Activated T-helper 2 cell treated with anti-CD3 and anti-CD28 coated beads, Interferon-gamma antibody, Interleukin-2, Interleukin-4, amounts not matched to agents 10 μg/mL and 5 μg/mL and 100 μg/mL, durations not matched to agents 14 hours and 24 hours and 36 hours (primary cell): ENCODE measurements at regions of chr10 and their contacts with region 1.

Region 1: GRCh38 chr10:63258920-63259678 is 126.0 kb downstream of the NRBF2 start:
- DNase-seq: no peak
- H3K4me3 Mint-ChIP-seq: no peak overlapping the region
- H3K27ac Mint-ChIP-seq: no peak overlapping the region
- H3K4me1 Mint-ChIP-seq: peaks cover 64% of the 10 kb centered on the region
- H3K27me3 Mint-ChIP-seq: no peaks in the 10 kb centered on the region

Region 2: DNA sequence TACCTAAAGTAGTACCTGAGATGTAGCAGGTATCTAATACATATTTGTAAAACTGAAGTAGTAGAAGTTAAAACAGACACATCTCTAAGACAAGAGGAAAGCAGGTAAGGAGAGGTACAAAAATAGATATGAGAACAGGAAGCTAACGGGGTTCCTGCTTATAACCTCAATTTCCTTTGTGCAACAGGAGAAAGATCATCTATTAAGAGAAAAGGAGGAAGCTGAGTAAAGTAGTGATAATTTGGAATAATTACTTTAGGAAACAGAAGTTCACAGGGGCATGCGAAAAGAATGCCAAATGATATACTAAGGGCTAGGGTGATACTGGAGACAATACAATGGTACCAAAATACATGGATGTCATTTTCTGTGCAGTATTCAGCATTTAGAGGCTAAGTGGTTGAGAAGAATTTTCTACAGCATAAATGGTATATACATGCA is 17.2 kb before region 1 on chr10:
- intact Hi-C with region 1: loop called (anchors 2 kb)
- DNase-seq: no peak
- H3K4me3 Mint-ChIP-seq: peak overlapping the region; percentile 57
- H3K27ac Mint-ChIP-seq: peak overlapping the region; percentile 49
- H3K4me1 Mint-ChIP-seq: peaks cover 65% of the 10 kb centered on the region
- H3K27me3 Mint-ChIP-seq: no peaks in the 10 kb centered on the region